CD4-positive, alpha-beta T cell (primary cell): ENCODE measurements at regions of chr15 and their contacts with region 1.

Region 1: GRCh38 chr15:25508369-25509002 is 69.7 kb upstream of the UBE3A start:
- DNase-seq: peak in 3 of 14 experiments; percentile 3 to 46 (median 35)
- ATAC-seq: no peak
- H3K4me3 ChIP-seq: no peak overlapping the region
- H3K4me3 Mint-ChIP-seq: no peak overlapping the region
- H3K27ac ChIP-seq: no peak overlapping the region
- H3K27ac Mint-ChIP-seq: no peak overlapping the region
- H3K4me1 ChIP-seq: no peaks in the 10 kb centered on the region
- H3K4me1 Mint-ChIP-seq: no peaks in the 10 kb centered on the region
- H3K27me3 ChIP-seq: no peaks in the 10 kb centered on the region
- H3K27me3 Mint-ChIP-seq: peaks cover 10% of the 10 kb centered on the region
- CTCF ChIP-seq: peak; percentile 70

Region 2: GRCh38 chr15:25797936-25798901 is 289.7 kb after region 1 on chr15:
- CTCF ChIA-PET with region 1: no interaction called
- POLR2A ChIA-PET with region 1: no interaction called
- intact Hi-C with region 1: no loop called
- DNase-seq: no peak
- ATAC-seq: no peak
- H3K4me3 ChIP-seq: no peak overlapping the region
- H3K4me3 Mint-ChIP-seq: peak overlapping the region; percentile 23
- H3K27ac ChIP-seq: no peak overlapping the region
- H3K27ac Mint-ChIP-seq: peak overlapping the region; percentile 69
- H3K4me1 ChIP-seq: peaks cover 55% of the 10 kb centered on the region
- H3K4me1 Mint-ChIP-seq: peaks cover 63% of the 10 kb centered on the region
- H3K27me3 ChIP-seq: no peaks in the 10 kb centered on the region
- H3K27me3 Mint-ChIP-seq: no peaks in the 10 kb centered on the region
- CTCF ChIP-seq: no peak

Region 3: GRCh38 chr15:25846377-25846776 is 337.9 kb after region 1 on chr15:
- CTCF ChIA-PET with region 1: no interaction called
- POLR2A ChIA-PET with region 1: no interaction called
- intact Hi-C with region 1: no loop called
- DNase-seq: peak; percentile 37 to 77 (median 59)
- ATAC-seq: peak; percentile 76
- H3K4me3 ChIP-seq: no peak overlapping the region
- H3K4me3 Mint-ChIP-seq: peak overlapping the region; percentile 78
- H3K27ac ChIP-seq: peak overlapping the region; percentile 47 to 69
- H3K27ac Mint-ChIP-seq: peak overlapping the region; percentile 93
- H3K4me1 ChIP-seq: peaks cover 65% of the 10 kb centered on the region
- H3K4me1 Mint-ChIP-seq: peaks cover 84% of the 10 kb centered on the region
- H3K27me3 ChIP-seq: no peaks in the 10 kb centered on the region
- H3K27me3 Mint-ChIP-seq: no peaks in the 10 kb centered on the region
- CTCF ChIP-seq: no peak

Region 4: GRCh38 chr15:26260517-26261133 is 752.1 kb after region 1 on chr15:
- CTCF ChIA-PET with region 1: no interaction called
- POLR2A ChIA-PET with region 1: no interaction called
- intact Hi-C with region 1: loop called in 1 of 2 experiments (anchors 2 kb)
- DNase-seq: peak in 8 of 14 experiments; percentile 4 to 54 (median 16)
- ATAC-seq: no peak
- H3K4me3 ChIP-seq: no peak overlapping the region
- H3K4me3 Mint-ChIP-seq: no peak overlapping the region
- H3K27ac ChIP-seq: no peak overlapping the region
- H3K27ac Mint-ChIP-seq: no peak overlapping the region
- H3K4me1 ChIP-seq: no peaks in the 10 kb centered on the region
- H3K4me1 Mint-ChIP-seq: no peaks in the 10 kb centered on the region
- H3K27me3 ChIP-seq: no peaks in the 10 kb centered on the region
- H3K27me3 Mint-ChIP-seq: peaks cover 8% of the 10 kb centered on the region
- CTCF ChIP-seq: peak; percentile 53

Region 5: GRCh38 chr15:26889298-26889898 is 1380.9 kb after region 1 on chr15:
- CTCF ChIA-PET with region 1: no interaction called
- POLR2A ChIA-PET with region 1: no interaction called
- intact Hi-C with region 1: loop called in 1 of 2 experiments (anchors 10 kb)
- DNase-seq: peak in 11 of 14 experiments; percentile 5 to 68 (median 24)
- ATAC-seq: no peak
- H3K4me3 ChIP-seq: no peak overlapping the region
- H3K4me3 Mint-ChIP-seq: no peak overlapping the region
- H3K27ac ChIP-seq: no peak overlapping the region
- H3K27ac Mint-ChIP-seq: no peak overlapping the region
- H3K4me1 ChIP-seq: peaks cover 8% of the 10 kb centered on the region
- H3K4me1 Mint-ChIP-seq: no peaks in the 10 kb centered on the region
- H3K27me3 ChIP-seq: peaks cover 0 to 7% of the 10 kb centered on the region in 2 experiments
- H3K27me3 Mint-ChIP-seq: peaks cover 31% of the 10 kb centered on the region
- CTCF ChIP-seq: peak; percentile 82